ENCODE measurements at regions of chr19 and their contacts with region 1.

Region 1: GRCh38 chr19:2627319-2627829 is 75.1 kb downstream of the GNG7 start:
- DNase-seq: peak; percentile 88
- ATAC-seq: peak; percentile 62
- H3K4me3 ChIP-seq: peak overlapping the region in 4 of 5 experiments; percentile 13 to 47 (median 24)
- H3K4me3 Mint-ChIP-seq: peak overlapping the region; percentile 86
- H3K27ac ChIP-seq: peak overlapping the region; percentile 96 to 97
- H3K27ac Mint-ChIP-seq: peak overlapping the region; percentile 98
- H3K4me1 ChIP-seq: peaks cover 93 to 99% of the 10 kb centered on the region in 2 donors
- H3K4me1 Mint-ChIP-seq: peaks cover 90% of the 10 kb centered on the region
- H3K27me3 ChIP-seq: no peaks in the 10 kb centered on the region
- H3K27me3 Mint-ChIP-seq: no peaks in the 10 kb centered on the region
- CTCF ChIP-seq: no peak

Region 2: GRCh38 chr19:1249298-1249989 is 1377.9 kb before region 1 on chr19:
- CTCF ChIA-PET with region 1: no interaction called
- POLR2A ChIA-PET with region 1: no interaction called
- intact Hi-C with region 1: loop called (anchors 10 kb)
- DNase-seq: peak; percentile 98
- ATAC-seq: peak; percentile 48
- H3K4me3 ChIP-seq: peak overlapping the region in 4 of 5 experiments; percentile 72 to 92 (median 88)
- H3K4me3 Mint-ChIP-seq: peak overlapping the region; percentile 86
- H3K27ac ChIP-seq: peak overlapping the region; percentile 73 to 94
- H3K27ac Mint-ChIP-seq: peak overlapping the region; percentile 92
- H3K4me1 ChIP-seq: peaks cover 29 to 56% of the 10 kb centered on the region in 2 donors
- H3K4me1 Mint-ChIP-seq: peaks cover 27% of the 10 kb centered on the region
- H3K27me3 ChIP-seq: no peaks in the 10 kb centered on the region
- H3K27me3 Mint-ChIP-seq: no peaks in the 10 kb centered on the region
- CTCF ChIP-seq: no peak

Region 3: DNA sequence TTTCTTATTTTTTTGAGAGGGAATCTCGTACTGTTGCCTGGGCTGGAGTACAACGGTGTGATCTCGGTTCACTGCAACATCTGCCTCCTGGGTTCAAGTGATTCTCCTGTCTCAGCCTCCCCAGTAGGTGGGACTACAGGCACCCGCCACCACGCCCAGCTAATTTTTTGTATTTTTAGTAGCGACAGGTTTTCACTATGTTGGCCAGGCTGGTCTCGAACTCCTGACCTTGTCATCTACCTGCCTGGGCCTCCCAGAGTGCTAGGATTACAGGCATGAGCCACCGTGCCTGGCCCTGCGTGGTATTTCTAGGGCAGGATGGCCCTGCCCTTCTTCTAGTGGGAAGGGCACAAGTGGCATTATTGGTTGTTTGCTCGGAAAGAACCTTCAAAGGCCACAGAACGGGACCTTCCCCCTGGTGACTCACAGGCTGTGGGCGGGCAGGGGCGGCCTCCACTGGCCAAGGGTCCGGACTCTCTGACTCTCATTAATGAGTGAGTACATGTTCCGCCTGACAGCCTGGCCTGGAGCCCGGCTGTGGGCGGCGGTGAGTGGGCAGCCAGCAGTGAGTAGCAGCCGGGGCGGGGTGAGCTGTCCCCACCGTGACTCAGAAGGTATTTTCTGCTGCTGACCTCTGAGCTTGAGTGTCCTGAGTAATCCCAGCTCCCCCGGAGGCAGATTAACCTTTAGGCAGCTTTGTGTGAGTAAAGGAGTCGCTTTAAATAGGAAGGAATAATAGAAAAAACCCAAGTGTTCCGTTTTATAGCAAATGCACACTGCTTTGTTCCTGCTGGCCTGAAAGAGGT is 458.6 kb before region 1 on chr19:
- CTCF ChIA-PET with region 1: no interaction called
- POLR2A ChIA-PET with region 1: no interaction called
- intact Hi-C with region 1: loop called (anchors 5 kb)
- DNase-seq: peak; percentile 81
- ATAC-seq: peak; percentile 44
- H3K4me3 ChIP-seq: peak overlapping the region; percentile 16 to 64 (median 37)
- H3K4me3 Mint-ChIP-seq: peak overlapping the region; percentile 88
- H3K27ac ChIP-seq: peak overlapping the region; percentile 90 to 95
- H3K27ac Mint-ChIP-seq: peak overlapping the region; percentile 95
- H3K4me1 ChIP-seq: peaks cover 66 to 88% of the 10 kb centered on the region in 2 donors
- H3K4me1 Mint-ChIP-seq: peaks cover 69% of the 10 kb centered on the region
- H3K27me3 ChIP-seq: no peaks in the 10 kb centered on the region
- H3K27me3 Mint-ChIP-seq: no peaks in the 10 kb centered on the region
- CTCF ChIP-seq: no peak

Region 4: GRCh38 chr19:2610637-2611482 is 16.5 kb before region 1 on chr19:
- CTCF ChIA-PET with region 1: interaction called, 593 read pairs
- POLR2A ChIA-PET with region 1: interaction called, 11 read pairs
- intact Hi-C with region 1: loop called (anchors 2 kb)
- DNase-seq: peak; percentile 89
- ATAC-seq: peak; percentile 58
- H3K4me3 ChIP-seq: peak overlapping the region in 4 of 5 experiments; percentile 31 to 69 (median 56)
- H3K4me3 Mint-ChIP-seq: peak overlapping the region; percentile 88
- H3K27ac ChIP-seq: peak overlapping the region; percentile 88 to 89
- H3K27ac Mint-ChIP-seq: peak overlapping the region; percentile 91
- H3K4me1 ChIP-seq: peaks cover 61 to 83% of the 10 kb centered on the region in 2 donors
- H3K4me1 Mint-ChIP-seq: peaks cover 74% of the 10 kb centered on the region
- H3K27me3 ChIP-seq: no peaks in the 10 kb centered on the region
- H3K27me3 Mint-ChIP-seq: no peaks in the 10 kb centered on the region
- CTCF ChIP-seq: peak; percentile 93

Region 5: GRCh38 chr19:2702162-2703076 is 75.0 kb after region 1 on chr19 and contains the start of gene GNG7:
- CTCF ChIA-PET with region 1: no interaction called
- POLR2A ChIA-PET with region 1: interaction called, 10 read pairs
- intact Hi-C with region 1: no loop called
- DNase-seq: peak; percentile 94
- ATAC-seq: peak; percentile 98
- H3K4me3 ChIP-seq: peak within 1 kb of the TSS; percentile 58 to 96 (median 77)
- H3K4me3 Mint-ChIP-seq: peak within 1 kb of the TSS; percentile 89
- H3K27ac ChIP-seq: peak within 1 kb of the TSS; percentile 81 to 89
- H3K27ac Mint-ChIP-seq: peak within 1 kb of the TSS; percentile 94
- H3K4me1 ChIP-seq: peaks cover 46 to 50% of the 10 kb centered on the region in 2 donors
- H3K4me1 Mint-ChIP-seq: peaks cover 37% of the 10 kb centered on the region
- H3K27me3 ChIP-seq: no peaks in the 10 kb centered on the region
- H3K27me3 Mint-ChIP-seq: no peaks in the 10 kb centered on the region
- CTCF ChIP-seq: no peak
- total RNA-seq, gene GNG7: 153 and 160 TPM in 2 replicates